ENCODE measurements at regions of chr1 and their contacts with region 1.

Region 1: GRCh38 chr1:190084552-190084951 is 393.1 kb downstream of the BRINP3 start:
- DNase-seq: no peak
- H3K4me3 ChIP-seq: no peak overlapping the region
- H3K27ac ChIP-seq: no peak overlapping the region
- H3K4me1 ChIP-seq: no peaks in the 10 kb centered on the region
- H3K27me3 ChIP-seq: no peaks in the 10 kb centered on the region
- CTCF ChIP-seq: no peak
- EP300 ChIP-seq: no peak
- POLR2A ChIP-seq: no peak

Region 2: GRCh38 chr1:189899686-189900440 is 184.7 kb before region 1 on chr1:
- intact Hi-C with region 1: no loop called
- DNase-seq: no peak
- H3K4me3 ChIP-seq: no peak overlapping the region
- H3K27ac ChIP-seq: no peak overlapping the region
- H3K4me1 ChIP-seq: no peaks in the 10 kb centered on the region
- H3K27me3 ChIP-seq: no peaks in the 10 kb centered on the region
- CTCF ChIP-seq: no peak
- EP300 ChIP-seq: no peak
- POLR2A ChIP-seq: no peak

Region 3: DNA sequence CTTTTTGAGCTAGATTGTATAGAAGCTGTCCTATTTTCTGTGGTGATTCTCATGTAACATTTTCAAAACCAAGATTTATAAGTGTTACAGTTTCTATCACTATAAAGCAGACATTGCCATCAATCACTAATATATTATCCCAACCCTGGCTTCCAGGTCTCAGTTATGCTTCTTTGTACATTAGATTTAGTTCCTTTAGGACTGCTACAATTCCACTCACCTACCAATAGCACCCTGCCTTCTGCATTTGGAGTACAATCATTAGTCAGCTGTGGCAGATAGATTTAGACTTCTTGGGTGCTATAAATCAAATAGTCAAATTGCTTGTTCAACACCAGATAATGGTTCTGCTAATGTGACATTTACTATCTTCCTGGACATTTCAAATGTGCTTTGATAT is 111.5 kb after region 1 on chr1:
- intact Hi-C with region 1: no loop called
- DNase-seq: no peak
- H3K4me3 ChIP-seq: no peak overlapping the region
- H3K27ac ChIP-seq: no peak overlapping the region
- H3K4me1 ChIP-seq: no peaks in the 10 kb centered on the region
- H3K27me3 ChIP-seq: no peaks in the 10 kb centered on the region
- CTCF ChIP-seq: no peak
- EP300 ChIP-seq: no peak
- POLR2A ChIP-seq: no peak

Region 4: GRCh38 chr1:190957570-190957969 is 873.0 kb after region 1 on chr1:
- intact Hi-C with region 1: no loop called
- DNase-seq: no peak
- H3K4me3 ChIP-seq: no peak overlapping the region
- H3K27ac ChIP-seq: no peak overlapping the region
- H3K4me1 ChIP-seq: no peaks in the 10 kb centered on the region
- H3K27me3 ChIP-seq: no peaks in the 10 kb centered on the region
- CTCF ChIP-seq: no peak
- EP300 ChIP-seq: no peak
- POLR2A ChIP-seq: no peak

Region 5: DNA sequence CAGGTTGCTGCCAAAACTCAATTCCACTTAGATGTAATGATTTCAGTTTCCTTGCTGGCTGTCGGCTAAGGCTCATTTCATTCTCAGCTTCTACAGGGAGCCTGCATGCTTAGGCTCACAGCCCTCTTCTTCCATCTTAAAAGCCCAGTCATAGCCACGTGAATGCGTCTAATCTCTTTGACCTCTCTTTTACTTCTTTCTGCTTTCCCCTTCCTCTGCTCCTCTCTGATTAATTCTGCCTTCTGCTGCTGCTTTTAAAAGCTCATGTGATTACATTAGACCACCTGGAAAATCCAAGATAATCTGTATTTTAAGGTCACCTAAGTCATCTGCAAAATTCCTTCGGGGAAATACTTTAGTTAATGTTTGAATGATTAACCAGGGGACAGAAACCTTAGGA is 1205.9 kb after region 1 on chr1:
- intact Hi-C with region 1: loop called in 1 of 4 experiments (anchors 5 kb)
- DNase-seq: no peak
- H3K4me3 ChIP-seq: no peak overlapping the region
- H3K27ac ChIP-seq: no peak overlapping the region
- H3K4me1 ChIP-seq: no peaks in the 10 kb centered on the region
- H3K27me3 ChIP-seq: no peaks in the 10 kb centered on the region
- CTCF ChIP-seq: no peak
- EP300 ChIP-seq: no peak
- POLR2A ChIP-seq: no peak